ENCODE measurements at regions of chr17 and their contacts with region 1.

Region 1: DNA sequence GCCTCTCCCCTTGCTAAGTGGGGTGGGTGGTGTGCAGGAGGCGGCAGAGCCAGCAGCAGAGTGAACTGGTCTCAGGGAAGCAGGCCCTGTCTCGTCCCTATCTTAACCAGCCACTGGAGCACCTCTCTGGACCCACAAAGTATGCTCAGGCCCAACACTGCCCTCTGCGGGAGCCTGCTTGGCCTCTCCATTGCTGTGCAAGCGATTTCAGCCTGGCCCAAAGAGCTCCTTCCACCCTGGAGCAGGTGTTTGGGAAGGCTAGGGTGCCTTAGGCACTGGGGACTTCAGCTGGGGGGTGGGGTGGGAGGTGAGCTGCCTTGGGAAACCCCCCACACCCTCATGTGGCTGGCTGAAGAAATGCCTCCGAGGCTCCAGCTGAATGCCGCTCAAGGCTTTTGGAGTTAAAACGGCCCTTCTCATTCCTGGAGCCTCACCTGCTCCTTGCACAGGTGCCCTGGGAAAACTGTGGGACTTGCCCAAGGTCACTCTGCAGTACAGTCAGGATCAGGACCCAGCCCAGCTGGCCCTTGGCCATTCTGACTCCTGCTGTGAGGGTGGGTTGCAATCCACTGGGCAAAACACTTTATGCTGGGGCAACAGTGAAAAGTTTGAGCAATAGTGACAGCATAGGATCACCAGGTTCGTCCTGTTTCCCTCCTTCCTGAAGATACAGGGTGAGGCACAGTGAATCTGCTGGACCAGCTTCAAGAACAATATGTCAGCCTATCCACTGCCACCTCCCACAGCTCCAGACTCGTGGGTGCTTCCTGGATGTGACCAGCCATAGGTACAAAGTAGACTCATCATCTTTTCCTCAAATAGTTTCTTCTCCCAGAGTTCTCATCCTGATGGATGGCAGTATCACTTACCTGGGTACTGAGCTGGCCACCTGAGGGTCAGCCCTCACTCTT is 5.9 kb upstream of the UBE2O start:
- DNase-seq: no peak
- ATAC-seq: peak; percentile 79
- H3K4me3 Mint-ChIP-seq: no peak overlapping the region
- H3K27ac Mint-ChIP-seq: no peak overlapping the region
- H3K4me1 Mint-ChIP-seq: no peaks in the 10 kb centered on the region
- H3K27me3 Mint-ChIP-seq: no peaks in the 10 kb centered on the region
- CTCF ChIP-seq: no peak

Region 2: GRCh38 chr17:75799398-75799797 is 659.4 kb before region 1 on chr17:
- CTCF ChIA-PET with region 1: no interaction called
- POLR2A ChIA-PET with region 1: no interaction called
- intact Hi-C with region 1: no loop called
- DNase-seq: peak; percentile 0
- ATAC-seq: no peak
- H3K4me3 Mint-ChIP-seq: no peak overlapping the region
- H3K27ac Mint-ChIP-seq: no peak overlapping the region
- H3K4me1 Mint-ChIP-seq: peaks cover 11% of the 10 kb centered on the region
- H3K27me3 Mint-ChIP-seq: no peaks in the 10 kb centered on the region
- CTCF ChIP-seq: no peak

Region 3: DNA sequence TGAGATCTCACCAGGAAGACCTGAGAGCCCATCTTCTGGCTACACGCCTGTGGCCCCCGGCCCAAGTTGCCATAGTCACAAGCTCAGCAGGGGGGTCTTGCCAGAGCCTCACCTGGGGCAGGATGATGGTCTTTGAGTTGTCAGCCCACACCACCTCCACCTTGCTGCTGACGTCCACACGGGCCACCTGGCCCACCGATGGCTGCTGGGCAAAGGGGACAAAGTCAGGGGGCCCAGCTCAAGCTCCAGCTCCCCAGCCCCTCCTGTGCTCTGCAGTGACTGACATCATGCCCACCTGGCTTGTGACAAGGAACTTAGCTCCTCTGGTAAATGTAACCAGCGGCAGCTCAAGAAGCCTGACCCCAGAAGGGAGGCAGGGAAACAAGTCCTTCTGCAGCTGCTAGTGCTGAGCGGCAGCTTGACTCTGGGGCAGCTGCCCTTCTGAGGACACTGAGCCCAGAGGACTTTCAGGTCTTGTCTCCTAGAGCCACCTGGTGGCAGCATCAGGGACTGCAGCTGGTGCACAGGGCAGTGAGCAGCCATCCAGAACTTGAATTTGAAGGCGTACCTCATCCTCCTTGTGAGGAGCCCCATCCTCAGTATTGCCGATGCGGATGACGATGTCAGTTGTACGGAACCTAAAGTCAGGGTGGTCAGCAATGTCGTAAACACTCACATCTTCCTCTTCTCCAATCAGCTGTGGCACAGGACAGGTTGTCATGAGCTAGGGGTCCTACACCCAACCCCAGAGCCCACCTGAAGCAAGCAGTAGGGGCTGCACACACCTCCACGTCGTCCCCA is 60.9 kb before region 1 on chr17:
- CTCF ChIA-PET with region 1: interaction called, 29 read pairs
- POLR2A ChIA-PET with region 1: no interaction called
- intact Hi-C with region 1: no loop called
- DNase-seq: peak; percentile 79
- ATAC-seq: peak; percentile 93
- H3K4me3 Mint-ChIP-seq: no peak overlapping the region
- H3K27ac Mint-ChIP-seq: no peak overlapping the region
- H3K4me1 Mint-ChIP-seq: peaks cover 3% of the 10 kb centered on the region
- H3K27me3 Mint-ChIP-seq: no peaks in the 10 kb centered on the region
- CTCF ChIP-seq: peak; percentile 98

Region 4: GRCh38 chr17:76492989-76493501 is 34.2 kb after region 1 on chr17:
- CTCF ChIA-PET with region 1: interaction called, 7 read pairs
- POLR2A ChIA-PET with region 1: interaction called, 17 read pairs
- intact Hi-C with region 1: no loop called
- DNase-seq: peak; percentile 53
- ATAC-seq: peak; percentile 59
- H3K4me3 Mint-ChIP-seq: peak overlapping the region; percentile 82
- H3K27ac Mint-ChIP-seq: peak overlapping the region; percentile 95
- H3K4me1 Mint-ChIP-seq: peaks cover 95% of the 10 kb centered on the region
- H3K27me3 Mint-ChIP-seq: no peaks in the 10 kb centered on the region
- CTCF ChIP-seq: no peak

Region 5: DNA sequence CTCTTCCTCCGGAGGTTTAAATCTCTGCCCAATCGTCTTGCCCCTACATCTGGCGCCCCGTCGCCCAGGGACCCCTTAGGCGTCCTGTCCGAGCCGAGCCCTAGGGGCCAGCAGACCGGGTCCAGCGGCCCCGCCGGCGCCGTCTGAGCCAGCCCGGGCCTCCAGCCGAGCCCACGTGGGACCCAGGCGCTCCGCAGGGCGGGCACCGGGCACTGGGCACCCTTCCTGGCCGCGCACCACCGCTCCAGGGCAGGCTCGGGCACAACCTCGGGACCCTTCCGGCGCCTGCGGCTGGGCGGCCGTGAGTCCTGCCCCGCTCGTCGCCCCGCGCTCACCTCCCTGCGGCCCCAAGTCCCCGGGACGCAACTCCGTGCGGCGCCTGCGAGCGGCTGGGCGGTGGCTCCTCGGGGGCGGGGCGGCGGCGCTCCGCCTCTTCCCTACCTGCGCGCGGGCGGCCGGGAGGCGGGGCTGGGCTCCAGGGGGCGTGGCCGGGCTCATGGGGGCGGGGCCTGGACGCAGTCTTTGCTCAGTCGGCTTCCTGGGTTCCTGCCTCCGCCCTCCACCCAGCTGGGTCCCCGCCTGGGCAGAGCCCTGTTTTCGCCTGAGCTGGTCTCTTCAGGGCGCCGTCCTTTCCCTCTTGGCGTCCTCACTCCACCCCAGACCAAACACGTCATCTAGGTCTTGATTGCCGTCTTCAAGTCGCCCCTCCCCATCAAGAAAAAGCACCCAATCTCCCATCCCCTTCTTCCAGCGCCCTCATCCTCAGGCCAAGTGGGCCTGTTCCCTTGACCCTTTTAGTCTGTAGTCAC is 42.4 kb after region 1 on chr17 and contains the start of gene RHBDF2:
- CTCF ChIA-PET with region 1: interaction called, 129 read pairs
- POLR2A ChIA-PET with region 1: interaction called, 11 read pairs
- intact Hi-C with region 1: no loop called
- DNase-seq: peak; percentile 100
- ATAC-seq: peak; percentile 87
- H3K4me3 Mint-ChIP-seq: peak within 1 kb of the TSS; percentile 99
- H3K27ac Mint-ChIP-seq: peak within 1 kb of the TSS; percentile 95
- H3K4me1 Mint-ChIP-seq: peaks cover 64% of the 10 kb centered on the region
- H3K27me3 Mint-ChIP-seq: no peaks in the 10 kb centered on the region
- CTCF ChIP-seq: no peak
- total RNA-seq, gene RHBDF2: 150 and 189 TPM in 2 replicates

Region 6: GRCh38 chr17:76506408-76507349 is 47.8 kb after region 1 on chr17:
- CTCF ChIA-PET with region 1: interaction called, 129 read pairs
- POLR2A ChIA-PET with region 1: interaction called, 11 read pairs
- intact Hi-C with region 1: no loop called
- DNase-seq: peak; percentile 93
- ATAC-seq: peak; percentile 85
- H3K4me3 Mint-ChIP-seq: no peak overlapping the region
- H3K27ac Mint-ChIP-seq: peak overlapping the region; percentile 50
- H3K4me1 Mint-ChIP-seq: peaks cover 26% of the 10 kb centered on the region
- H3K27me3 Mint-ChIP-seq: peaks cover 4% of the 10 kb centered on the region
- CTCF ChIP-seq: peak; percentile 66

Region 7: DNA sequence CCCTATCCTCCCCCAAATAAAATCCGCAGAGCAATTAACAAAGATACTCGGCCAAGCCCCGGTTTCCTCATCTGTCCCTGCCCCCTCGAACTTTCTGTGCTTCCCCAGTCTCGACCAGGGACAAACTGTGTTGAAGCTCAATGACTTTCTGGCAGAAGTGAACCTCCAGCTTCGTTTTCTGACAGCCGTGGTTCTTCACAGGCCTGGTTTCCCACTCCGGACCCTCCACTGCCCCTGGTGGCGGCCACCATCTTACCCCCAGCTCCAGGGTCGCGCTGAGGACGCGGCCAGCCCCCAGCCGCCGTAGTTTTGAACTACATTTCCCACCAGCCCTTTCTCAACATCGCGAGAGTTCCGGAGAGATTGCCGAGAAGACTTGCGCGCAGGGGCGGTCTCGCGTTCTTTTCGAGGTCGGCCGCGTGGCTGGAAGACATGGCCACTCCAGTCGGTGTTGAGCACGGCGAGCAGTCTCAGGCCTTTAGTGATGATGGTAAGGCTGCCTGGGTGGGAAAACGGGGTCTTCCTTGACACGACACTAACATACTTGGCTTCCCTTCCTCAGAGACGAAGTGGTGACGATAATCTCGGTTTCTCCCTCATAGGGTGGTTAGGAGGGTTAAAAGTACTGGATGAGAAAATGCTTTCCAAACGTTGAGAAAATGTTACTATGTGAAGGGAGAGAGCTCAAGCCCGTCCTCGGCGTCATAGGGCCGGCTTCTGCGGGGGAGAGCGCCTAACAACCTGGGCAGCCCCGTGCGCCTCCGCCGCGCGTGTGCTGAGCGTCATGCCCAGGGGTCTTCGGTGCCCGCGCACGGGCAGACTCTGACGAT is 98.7 kb after region 1 on chr17:
- CTCF ChIA-PET with region 1: no interaction called
- POLR2A ChIA-PET with region 1: no interaction called
- intact Hi-C with region 1: no loop called
- DNase-seq: peak; percentile 87
- ATAC-seq: peak; percentile 90
- H3K4me3 Mint-ChIP-seq: peak overlapping the region; percentile 95
- H3K27ac Mint-ChIP-seq: peak overlapping the region; percentile 98
- H3K4me1 Mint-ChIP-seq: peaks cover 68% of the 10 kb centered on the region
- H3K27me3 Mint-ChIP-seq: no peaks in the 10 kb centered on the region
- CTCF ChIP-seq: no peak

Measured in activated B cell treated with CpG ODN at 0.5 μM for 24 hours (primary cell).